ENCODE measurements at regions of chr7 and their contacts with region 1.

Region 1: GRCh38 chr7:148962823-148963582 is 65.3 kb downstream of the PDIA4 start:
- H3K4me3 Mint-ChIP-seq: peak overlapping the region; percentile 78
- H3K27ac Mint-ChIP-seq: peak overlapping the region; percentile 80
- H3K4me1 Mint-ChIP-seq: peaks cover 30% of the 10 kb centered on the region
- H3K27me3 Mint-ChIP-seq: no peaks in the 10 kb centered on the region

Region 2: GRCh38 chr7:148262721-148263229 is 700.2 kb before region 1 on chr7:
- intact Hi-C with region 1: loop called (anchors 5 kb)
- H3K4me3 Mint-ChIP-seq: peak overlapping the region; percentile 17
- H3K27ac Mint-ChIP-seq: no peak overlapping the region
- H3K4me1 Mint-ChIP-seq: peaks cover 11% of the 10 kb centered on the region
- H3K27me3 Mint-ChIP-seq: peaks cover 7% of the 10 kb centered on the region

Region 3: DNA sequence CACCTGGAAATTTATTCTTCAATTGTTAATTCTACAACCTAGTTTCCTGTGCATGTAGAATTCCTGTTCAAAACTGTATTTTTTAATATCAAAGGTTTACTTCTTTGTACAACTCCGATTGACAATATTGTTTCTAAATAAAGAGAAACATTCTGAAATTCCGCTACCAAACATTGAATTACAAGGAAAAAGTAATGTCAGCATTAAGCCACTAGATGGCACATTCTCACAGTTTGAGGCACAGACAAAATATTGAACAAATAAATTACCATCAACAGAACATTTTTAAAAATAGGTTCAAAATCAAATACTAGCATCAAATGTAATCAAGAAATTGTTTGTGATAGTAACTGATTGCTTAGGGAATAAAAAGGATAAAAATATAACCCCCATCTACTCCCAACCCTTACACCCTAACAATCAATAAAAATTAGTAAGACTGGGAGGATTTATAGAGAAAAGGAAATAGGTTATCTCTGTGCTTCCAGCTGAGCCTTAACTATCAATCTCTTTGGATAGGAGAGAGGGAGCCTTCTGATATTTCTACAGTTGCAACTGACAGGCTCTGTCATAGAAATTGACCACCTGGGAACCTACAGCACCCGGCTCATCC is 459.0 kb before region 1 on chr7:
- intact Hi-C with region 1: loop called (anchors 1 kb)
- H3K4me3 Mint-ChIP-seq: no peak overlapping the region
- H3K27ac Mint-ChIP-seq: no peak overlapping the region
- H3K4me1 Mint-ChIP-seq: peaks cover 8% of the 10 kb centered on the region
- H3K27me3 Mint-ChIP-seq: peaks cover 19% of the 10 kb centered on the region

Region 4: DNA sequence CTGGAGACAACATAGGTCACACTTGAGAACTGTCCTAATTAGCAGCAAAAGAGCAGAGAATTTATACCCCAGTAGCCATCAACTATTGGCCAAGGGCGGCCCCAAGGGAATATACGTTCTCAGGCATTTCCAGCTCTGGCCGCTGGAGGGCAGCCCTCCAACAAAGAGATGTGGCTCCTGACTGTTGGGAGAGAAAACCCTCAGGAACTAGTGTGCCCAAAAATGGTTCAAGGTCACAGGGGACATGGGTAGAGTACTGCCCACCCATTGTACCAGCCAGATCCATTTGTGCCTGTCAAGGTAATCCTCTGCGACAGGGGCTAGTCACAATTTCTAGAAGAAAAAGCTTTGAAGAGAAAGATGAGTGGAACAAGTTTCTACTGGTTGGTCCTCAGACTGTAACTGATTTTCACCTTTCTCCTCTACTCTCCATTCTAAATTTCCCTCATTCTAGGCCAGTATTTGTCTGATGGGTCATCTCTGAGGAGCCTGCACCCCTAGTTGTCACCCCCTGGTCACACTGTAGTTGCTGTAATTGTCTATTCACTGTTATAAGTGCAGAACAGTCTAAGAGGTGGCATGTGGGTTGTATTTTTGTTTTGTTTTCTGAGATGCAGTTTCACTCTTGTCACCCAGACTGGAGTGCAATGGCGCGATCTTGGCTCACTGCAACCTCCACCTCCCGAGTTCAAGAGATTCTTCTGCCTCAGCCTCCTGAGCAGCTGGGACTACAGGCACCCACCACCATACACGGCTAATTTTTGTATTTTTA is 387.2 kb before region 1 on chr7:
- intact Hi-C with region 1: loop called (anchors 5 kb)
- H3K4me3 Mint-ChIP-seq: no peak overlapping the region
- H3K27ac Mint-ChIP-seq: peak overlapping the region; percentile 53
- H3K4me1 Mint-ChIP-seq: peaks cover 16% of the 10 kb centered on the region
- H3K27me3 Mint-ChIP-seq: no peaks in the 10 kb centered on the region

Region 5: DNA sequence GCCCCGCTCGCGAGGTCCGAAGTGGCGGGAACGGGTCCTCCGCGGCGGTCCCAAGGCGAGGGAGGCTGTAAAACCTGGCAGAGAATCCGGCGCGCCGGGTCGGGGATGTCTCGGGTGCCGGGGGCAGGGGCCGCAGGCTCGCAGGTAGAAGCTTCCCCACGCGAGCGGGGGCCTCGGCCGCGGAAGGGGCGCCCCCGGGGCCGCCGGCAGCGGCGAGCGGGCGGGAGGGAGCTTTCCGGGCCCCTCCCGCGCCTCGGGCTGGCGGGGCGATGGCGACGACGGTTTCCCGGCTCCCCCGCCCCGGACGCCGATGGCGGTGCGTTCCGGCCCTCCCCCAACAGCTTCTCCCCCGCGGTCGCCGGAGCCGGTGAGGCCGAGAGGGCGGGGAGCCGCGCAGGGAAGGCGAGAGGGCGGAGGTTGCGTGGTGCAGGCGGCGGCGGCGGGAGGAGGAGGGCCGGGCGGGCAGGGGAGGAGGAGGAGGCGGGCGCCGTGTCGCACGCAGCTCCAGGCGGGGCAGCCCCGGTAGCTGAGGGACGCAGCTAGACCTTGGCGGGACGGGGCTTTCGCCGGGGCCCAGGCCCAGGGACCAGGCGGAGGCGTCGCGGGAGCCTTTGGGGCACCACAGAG is 264.5 kb before region 1 on chr7 and contains the start of gene CUL1:
- intact Hi-C with region 1: loop called (anchors 10 kb)
- H3K4me3 Mint-ChIP-seq: peak within 1 kb of the TSS; percentile 91
- H3K27ac Mint-ChIP-seq: peak within 1 kb of the TSS; percentile 82
- H3K4me1 Mint-ChIP-seq: peaks cover 45% of the 10 kb centered on the region
- H3K27me3 Mint-ChIP-seq: no peaks in the 10 kb centered on the region

Region 6: GRCh38 chr7:148884299-148885022 is 78.5 kb before region 1 on chr7:
- intact Hi-C with region 1: loop called (anchors 5 kb)
- H3K4me3 Mint-ChIP-seq: peak overlapping the region; percentile 80
- H3K27ac Mint-ChIP-seq: peak overlapping the region; percentile 88
- H3K4me1 Mint-ChIP-seq: peaks cover 21% of the 10 kb centered on the region
- H3K27me3 Mint-ChIP-seq: no peaks in the 10 kb centered on the region

Region 7: GRCh38 chr7:148940702-148941597 is 22.1 kb before region 1 on chr7:
- intact Hi-C with region 1: loop called (anchors 2 kb)
- H3K4me3 Mint-ChIP-seq: peak overlapping the region; percentile 85
- H3K27ac Mint-ChIP-seq: peak overlapping the region; percentile 97
- H3K4me1 Mint-ChIP-seq: peaks cover 11% of the 10 kb centered on the region
- H3K27me3 Mint-ChIP-seq: no peaks in the 10 kb centered on the region